ENCODE measurements at regions of chr7 and their contacts with region 1.

Region 1: DNA sequence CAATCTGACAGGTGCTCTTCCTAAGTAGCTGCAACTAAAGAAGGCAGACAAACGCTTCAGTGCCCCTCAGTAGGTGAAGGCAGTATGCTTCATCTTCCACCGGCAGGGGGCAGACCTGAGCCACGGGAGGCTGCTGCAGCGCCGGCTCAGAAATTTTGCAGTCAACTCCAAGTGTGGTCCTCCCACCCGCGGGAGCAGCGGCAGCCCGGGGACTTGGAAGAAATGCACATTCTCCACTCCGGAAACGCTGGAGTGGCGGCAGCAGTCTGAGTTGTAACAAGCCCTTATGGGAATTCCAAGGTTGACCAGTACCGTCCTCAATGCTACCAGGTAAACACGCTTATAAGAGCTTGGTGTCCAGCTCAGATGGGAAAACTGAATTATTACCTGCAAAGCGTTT is 3.4 kb downstream of the IGFBP3 start:
- DNase-seq: peak; percentile 69 to 78
- ATAC-seq: peak; percentile 33 to 62; a peak in 4 of 6 replicates
- H3K4me3 ChIP-seq: peak overlapping the region; percentile 66
- H3K27ac ChIP-seq: peak overlapping the region in 1 of 2 experiments; percentile 37; a peak in 3 of 6 replicates
- H3K4me1 ChIP-seq: peaks cover 36% of the 10 kb centered on the region
- CTCF ChIP-seq: peak; percentile 91
- EP300 ChIP-seq: no peak
- POLR2A ChIP-seq: no peak
- RAD21 ChIP-seq: peak; percentile 87 to 91

Region 2: DNA sequence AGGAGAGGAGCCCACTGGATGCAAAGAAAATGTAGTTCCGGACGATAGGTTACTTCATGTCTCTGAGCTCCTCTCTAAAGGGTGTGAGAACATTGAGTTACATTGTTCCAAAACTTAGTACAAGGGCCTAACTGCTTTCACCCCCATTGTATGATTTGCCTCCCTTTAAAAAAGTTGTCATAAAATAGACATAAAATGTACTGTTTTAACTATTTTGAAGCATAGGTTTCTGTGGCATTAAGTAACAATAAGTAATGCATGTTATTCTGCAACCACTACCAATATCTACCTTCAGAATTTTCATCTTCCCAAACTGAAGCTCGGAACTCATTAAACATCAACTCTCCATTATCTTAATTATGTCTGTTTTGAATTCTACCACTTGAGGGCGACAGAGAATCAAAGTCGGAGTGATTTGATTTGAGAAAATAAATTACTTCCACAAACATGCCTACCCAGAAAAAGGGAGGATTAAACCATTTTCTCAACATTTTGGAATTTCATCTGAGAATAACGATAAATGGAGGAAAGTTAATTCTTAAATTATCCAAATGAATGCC is 26.7 kb before region 1 on chr7:
- CTCF ChIA-PET with region 1: interaction called, 51 read pairs
- POLR2A ChIA-PET with region 1: interaction called, 9 read pairs
- DNase-seq: peak in 1 of 2 experiments; percentile 38
- ATAC-seq: no peak
- H3K4me3 ChIP-seq: no peak overlapping the region
- H3K27ac ChIP-seq: peak overlapping the region in 1 of 2 experiments; percentile 86; a peak in 1 of 6 replicates
- H3K4me1 ChIP-seq: peaks cover 27% of the 10 kb centered on the region
- CTCF ChIP-seq: peak; percentile 87
- EP300 ChIP-seq: no peak
- POLR2A ChIP-seq: no peak
- RAD21 ChIP-seq: peak; percentile 81 to 87

Region 3: GRCh38 chr7:46352004-46352954 is 434.6 kb after region 1 on chr7:
- CTCF ChIA-PET with region 1: interaction called, 285 read pairs
- POLR2A ChIA-PET with region 1: no interaction called
- DNase-seq: peak; percentile 65 to 79
- ATAC-seq: peak; percentile 76 to 92; a peak in 5 of 6 replicates
- H3K4me3 ChIP-seq: no peak overlapping the region
- H3K27ac ChIP-seq: peak overlapping the region; percentile 18 to 42; a peak in 3 of 6 replicates
- H3K4me1 ChIP-seq: peaks cover 23% of the 10 kb centered on the region
- CTCF ChIP-seq: peak; percentile 95
- EP300 ChIP-seq: no peak
- POLR2A ChIP-seq: no peak
- RAD21 ChIP-seq: peak; percentile 99

Region 4: DNA sequence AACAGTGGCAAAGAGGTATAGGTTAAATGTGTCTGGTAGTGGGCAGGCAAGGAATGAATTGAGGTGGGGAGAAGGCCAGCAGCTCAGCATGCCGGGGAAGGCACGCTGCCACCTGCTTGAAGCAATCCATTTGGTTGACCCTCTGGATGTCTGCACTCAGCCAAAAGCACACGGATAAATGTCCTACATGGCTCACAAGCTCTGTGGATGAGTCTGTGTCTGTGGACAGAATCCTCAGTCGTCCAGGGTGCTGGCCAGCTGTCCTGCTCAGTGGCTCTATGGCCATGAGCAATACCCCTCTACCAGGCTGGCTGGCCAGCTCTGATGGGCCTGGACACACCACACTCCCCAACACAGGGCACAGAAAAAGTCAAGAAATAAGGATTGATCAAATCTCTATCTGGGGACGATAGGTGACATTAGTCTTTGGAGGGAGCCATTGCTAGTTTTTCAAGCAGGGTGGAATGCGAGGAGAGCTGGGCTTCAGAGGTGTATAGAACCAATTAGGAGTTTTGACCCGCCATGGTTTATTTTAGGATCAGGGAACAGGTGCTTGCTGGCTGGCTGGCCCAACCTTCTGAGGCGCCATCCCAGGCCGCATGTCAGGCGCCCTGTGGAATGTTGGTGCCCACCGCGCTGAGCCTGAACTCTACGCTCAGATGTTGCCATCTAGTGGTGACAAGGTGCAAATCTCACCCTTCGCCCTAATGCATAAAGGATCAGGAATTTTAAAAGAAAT is 1170.8 kb after region 1 on chr7:
- CTCF ChIA-PET with region 1: interaction called, 243 read pairs
- POLR2A ChIA-PET with region 1: no interaction called
- DNase-seq: peak; percentile 57 to 65
- ATAC-seq: peak; percentile 90 to 98
- H3K4me3 ChIP-seq: no peak overlapping the region
- H3K27ac ChIP-seq: peak overlapping the region; percentile 59 to 74
- H3K4me1 ChIP-seq: peaks cover 15% of the 10 kb centered on the region
- CTCF ChIP-seq: peak; percentile 91
- EP300 ChIP-seq: no peak
- POLR2A ChIP-seq: no peak
- RAD21 ChIP-seq: peak; percentile 95 to 98

Region 5: GRCh38 chr7:47254081-47255006 is 1336.7 kb after region 1 on chr7:
- CTCF ChIA-PET with region 1: interaction called, 14 read pairs
- POLR2A ChIA-PET with region 1: no interaction called
- DNase-seq: peak; percentile 59 to 74
- ATAC-seq: peak; percentile 81 to 93
- H3K4me3 ChIP-seq: peak overlapping the region; percentile 61
- H3K27ac ChIP-seq: peak overlapping the region; percentile 80 to 91
- H3K4me1 ChIP-seq: peaks cover 13% of the 10 kb centered on the region
- CTCF ChIP-seq: peak; percentile 97
- EP300 ChIP-seq: no peak
- POLR2A ChIP-seq: peak; percentile 41
- RAD21 ChIP-seq: peak; percentile 60 to 87